Heart left ventricle (tissue), 16 donors: ENCODE measurements at regions of chr6 and their contacts with region 1.

Region 1: GRCh38 chr6:161543684-161544309 is 269.9 kb upstream of the AGPAT4 start:
- DNase-seq: no peak
- ATAC-seq: no peak
- H3K4me3 ChIP-seq: no peak overlapping the region
- H3K27ac ChIP-seq: no peak overlapping the region
- H3K4me1 ChIP-seq: peaks cover 0 to 10% (median 0%) of the 10 kb centered on the region in 12 donors
- H3K27me3 ChIP-seq: no peaks in the 10 kb centered on the region
- CTCF ChIP-seq: no peak
- POLR2A ChIP-seq: no peak

Region 2: DNA sequence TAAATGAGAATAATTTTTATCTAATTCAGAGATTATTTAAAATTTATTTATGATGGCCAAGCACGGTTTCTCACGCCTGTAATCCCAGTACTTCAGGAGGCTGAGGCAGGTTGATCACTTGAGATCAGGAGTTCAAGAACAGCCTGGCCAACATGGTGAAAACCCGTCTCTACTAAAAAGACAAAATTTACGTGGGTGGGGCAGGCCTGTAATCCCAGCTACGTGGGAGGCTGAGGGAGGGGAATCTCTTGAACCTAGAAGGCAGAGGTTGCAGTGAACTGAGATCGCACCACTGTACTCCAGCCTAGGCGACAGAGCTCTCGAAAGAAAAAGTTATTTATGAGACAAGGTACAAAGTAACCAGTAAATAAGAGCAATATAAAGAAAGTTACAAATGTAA is 210.4 kb before region 1 on chr6:
- intact Hi-C with region 1: no loop called
- DNase-seq: no peak
- ATAC-seq: no peak
- H3K4me3 ChIP-seq: no peak overlapping the region
- H3K27ac ChIP-seq: no peak overlapping the region
- H3K4me1 ChIP-seq: no peaks in the 10 kb centered on the region
- H3K27me3 ChIP-seq: no peaks in the 10 kb centered on the region
- CTCF ChIP-seq: no peak
- POLR2A ChIP-seq: no peak

Region 3: DNA sequence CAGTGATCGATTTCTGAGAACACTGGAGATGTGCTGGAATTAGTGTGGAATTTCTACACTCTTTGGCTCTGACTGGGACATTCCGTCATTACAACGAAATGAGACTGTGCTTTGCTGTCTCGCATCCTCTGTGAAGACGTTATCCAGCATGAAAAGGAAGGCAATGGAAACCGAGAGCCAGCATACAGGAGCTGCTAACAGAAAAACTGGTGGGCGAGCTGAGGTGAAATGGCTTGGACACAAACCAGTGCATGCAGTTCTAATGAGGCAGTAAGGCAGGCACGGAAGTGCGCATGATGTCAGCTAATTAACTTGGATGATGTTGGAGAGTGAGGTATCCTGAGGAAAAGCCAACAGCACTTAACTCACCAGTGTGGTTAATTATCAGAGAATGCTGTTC is 67.1 kb before region 1 on chr6:
- intact Hi-C with region 1: loop called in 1 of 10 experiments (anchors 2 kb)
- DNase-seq: peak in 3 of 5 donors; percentile 28 to 58 (median 39)
- ATAC-seq: peak; percentile 50 to 95 (median 74)
- H3K4me3 ChIP-seq: peak overlapping the region in 2 of 12 donors; percentile 6 to 27
- H3K27ac ChIP-seq: peak overlapping the region in 5 of 12 donors; percentile 2 to 64 (median 43)
- H3K4me1 ChIP-seq: peaks cover 0 to 5% (median 0%) of the 10 kb centered on the region in 12 donors
- H3K27me3 ChIP-seq: no peaks in the 10 kb centered on the region
- CTCF ChIP-seq: no peak
- POLR2A ChIP-seq: no peak